Ovary (tissue), 10 donors: ENCODE measurements at regions of chr6 and their contacts with region 1.

Region 1: GRCh38 chr6:26270903-26271667 is 93.9 kb upstream of the BTN3A2 start:
- DNase-seq: peak in 4 of 5 donors; percentile 20 to 65 (median 42)
- H3K4me3 ChIP-seq: peak overlapping the region; percentile 34
- H3K27ac ChIP-seq: peak overlapping the region in 1 of 2 donors; percentile 51
- H3K4me1 ChIP-seq: peaks cover 2% of the 10 kb centered on the region
- H3K27me3 ChIP-seq: no peaks in the 10 kb centered on the region
- CTCF ChIP-seq: no peak
- EP300 ChIP-seq: no peak
- POLR2A ChIP-seq: no peak

Region 2: DNA sequence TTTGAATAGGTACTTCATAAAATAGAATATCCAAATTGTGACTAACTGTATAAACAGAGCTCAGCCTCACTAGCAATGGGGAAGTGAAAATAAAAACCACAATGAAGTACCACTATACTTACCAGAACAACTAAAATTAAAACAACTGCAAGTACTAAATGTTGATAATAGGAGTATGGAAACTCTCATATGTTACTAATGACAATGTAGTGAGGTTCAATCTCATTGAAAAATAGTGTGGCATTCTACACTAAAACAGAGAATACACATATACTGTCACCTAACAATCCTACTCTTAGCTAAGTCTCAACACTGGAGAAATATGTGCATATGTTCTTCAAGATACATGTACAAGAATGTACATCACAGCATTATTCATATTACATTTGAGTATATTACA is 1123.9 kb before region 1 on chr6:
- intact Hi-C with region 1: no loop called
- DNase-seq: no peak
- H3K4me3 ChIP-seq: no peak overlapping the region
- H3K27ac ChIP-seq: no peak overlapping the region
- H3K4me1 ChIP-seq: peaks cover 2% of the 10 kb centered on the region
- H3K27me3 ChIP-seq: no peaks in the 10 kb centered on the region
- CTCF ChIP-seq: no peak
- EP300 ChIP-seq: no peak
- POLR2A ChIP-seq: no peak

Region 3: GRCh38 chr6:26216356-26216885 is 54.7 kb before region 1 on chr6:
- intact Hi-C with region 1: loop called in 1 of 4 experiments (anchors 2 kb)
- DNase-seq: peak; percentile 70 to 82 (median 74)
- H3K4me3 ChIP-seq: peak overlapping the region; percentile 49
- H3K27ac ChIP-seq: peak overlapping the region; percentile 29 to 91
- H3K4me1 ChIP-seq: peaks cover 6% of the 10 kb centered on the region
- H3K27me3 ChIP-seq: no peaks in the 10 kb centered on the region
- CTCF ChIP-seq: no peak
- EP300 ChIP-seq: no peak
- POLR2A ChIP-seq: peak; percentile 92

Region 4: GRCh38 chr6:26234421-26235296 is 36.4 kb before region 1 on chr6:
- intact Hi-C with region 1: loop called in 1 of 4 experiments (anchors 5 kb)
- DNase-seq: peak in 1 of 5 donors; percentile 27
- H3K4me3 ChIP-seq: peak overlapping the region; percentile 43
- H3K27ac ChIP-seq: peak overlapping the region in 1 of 2 donors; percentile 18
- H3K4me1 ChIP-seq: peaks cover 4% of the 10 kb centered on the region
- H3K27me3 ChIP-seq: no peaks in the 10 kb centered on the region
- CTCF ChIP-seq: no peak
- EP300 ChIP-seq: no peak
- POLR2A ChIP-seq: peak; percentile 21